ENCODE measurements at regions of chr2 and their contacts with region 1.

Region 1: GRCh38 chr2:100494712-100495111 is 24.4 kb downstream of the NMS start:
- DNase-seq: no peak
- H3K4me3 ChIP-seq: no peak overlapping the region
- H3K27ac ChIP-seq: no peak overlapping the region
- H3K4me1 ChIP-seq: no peaks in the 10 kb centered on the region
- H3K27me3 ChIP-seq: peaks cover 72% of the 10 kb centered on the region
- CTCF ChIP-seq: no peak

Region 2: DNA sequence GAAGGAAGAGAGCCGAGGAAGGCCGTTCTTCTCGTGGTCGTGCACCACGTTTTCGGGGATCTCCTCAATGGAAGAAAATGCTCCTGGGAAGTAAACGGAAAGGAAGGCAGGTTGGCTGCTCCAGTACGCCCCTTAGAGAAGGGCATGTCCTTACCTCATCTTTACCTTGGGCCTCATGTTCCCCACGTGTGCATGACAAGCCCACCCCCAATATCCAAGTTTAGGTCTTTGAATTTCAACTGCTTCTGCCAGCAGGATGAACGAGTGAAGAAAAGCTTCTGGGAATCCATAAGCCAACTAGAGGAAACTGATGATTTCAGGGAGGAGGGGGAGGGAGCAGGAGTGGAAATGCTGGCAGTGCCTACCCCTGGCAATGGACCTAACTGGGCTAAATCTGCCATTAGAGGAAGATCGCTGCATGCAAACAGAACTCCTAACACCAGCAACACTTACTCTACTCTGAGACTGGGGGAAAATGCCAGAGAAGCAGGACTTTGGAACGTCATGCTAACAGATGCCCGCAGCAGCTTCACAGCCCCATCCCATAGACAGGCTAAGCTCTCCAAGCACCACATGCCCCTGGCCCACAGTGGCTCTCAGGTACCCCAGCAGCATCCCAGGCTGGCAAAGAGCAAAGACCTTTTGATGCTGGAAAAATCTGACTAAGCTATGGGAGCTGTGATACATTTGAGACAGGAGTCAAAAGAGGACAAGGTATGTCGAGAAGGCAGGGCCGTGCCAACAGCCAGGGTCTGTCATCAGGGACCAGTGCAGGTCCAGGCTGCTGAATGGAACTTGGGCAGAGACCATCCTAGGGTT is 99.0 kb before region 1 on chr2:
- CTCF ChIA-PET with region 1: no interaction called
- POLR2A ChIA-PET with region 1: interaction called, 14 read pairs
- intact Hi-C with region 1: no loop called
- DNase-seq: no peak
- H3K4me3 ChIP-seq: no peak overlapping the region
- H3K27ac ChIP-seq: no peak overlapping the region
- H3K4me1 ChIP-seq: no peaks in the 10 kb centered on the region
- H3K27me3 ChIP-seq: peaks cover 100% of the 10 kb centered on the region
- CTCF ChIP-seq: no peak

Region 3: GRCh38 chr2:100407108-100407507 is 87.6 kb before region 1 on chr2:
- CTCF ChIA-PET with region 1: no interaction called
- POLR2A ChIA-PET with region 1: no interaction called
- intact Hi-C with region 1: no loop called
- DNase-seq: no peak
- H3K4me3 ChIP-seq: no peak overlapping the region
- H3K27ac ChIP-seq: no peak overlapping the region
- H3K4me1 ChIP-seq: no peaks in the 10 kb centered on the region
- H3K27me3 ChIP-seq: peaks cover 97% of the 10 kb centered on the region
- CTCF ChIP-seq: no peak

Measured in PC-9 (cell line).